ENCODE measurements at regions of chr2 and their contacts with region 1.

Region 1: DNA sequence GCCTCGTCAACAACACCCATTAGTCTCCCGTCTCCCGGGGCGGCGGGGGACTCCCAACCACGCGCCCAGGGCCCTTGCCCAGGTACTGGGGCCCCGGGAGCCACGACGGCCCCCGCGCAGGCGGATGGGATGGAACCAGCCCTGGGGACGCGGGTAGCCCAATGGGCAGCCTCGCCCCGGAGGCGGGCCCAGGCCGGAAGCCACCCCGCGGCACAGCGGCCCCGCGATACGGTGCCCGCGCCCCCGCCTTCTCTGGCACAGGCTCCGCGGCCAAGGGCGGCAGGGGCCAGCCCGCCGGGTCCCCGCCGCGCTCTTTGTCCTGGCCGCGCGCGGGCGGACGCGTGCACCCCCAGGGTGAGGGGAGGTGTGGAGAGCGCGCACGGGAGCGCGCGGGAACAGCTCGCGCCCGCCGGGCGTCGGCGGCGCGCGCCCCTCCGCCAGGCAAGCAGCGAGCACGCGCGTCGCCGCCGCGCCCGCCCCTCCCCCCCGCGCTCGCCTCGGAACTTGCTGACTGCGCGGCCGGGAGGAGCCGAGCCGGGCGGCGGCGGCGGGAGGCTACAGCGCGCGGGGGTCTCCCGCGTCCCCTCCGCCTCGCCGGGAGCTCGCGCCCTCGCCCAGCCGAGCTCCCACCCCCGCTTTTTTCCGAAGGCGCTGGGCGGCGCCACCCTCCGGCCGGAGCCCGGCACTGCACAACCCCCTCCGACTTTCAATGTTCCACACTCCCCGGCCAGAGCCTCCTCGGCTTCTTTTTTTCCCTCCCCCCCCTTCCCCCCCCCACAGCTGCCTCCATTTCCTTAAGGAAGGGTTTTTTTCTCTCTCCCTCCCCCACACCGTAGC is at the start of gene UBE2E3:
- DNase-seq: peak; percentile 86
- H3K4me3 Mint-ChIP-seq: peak within 1 kb of the TSS; percentile 86
- H3K27ac Mint-ChIP-seq: peak within 1 kb of the TSS; percentile 90
- H3K4me1 Mint-ChIP-seq: peaks cover 39% of the 10 kb centered on the region
- H3K27me3 Mint-ChIP-seq: no peaks in the 10 kb centered on the region
- CTCF ChIP-seq: peak; percentile 80
- total RNA-seq, gene UBE2E3: 57.8 and 64.3 TPM in 2 replicates

Region 2: DNA sequence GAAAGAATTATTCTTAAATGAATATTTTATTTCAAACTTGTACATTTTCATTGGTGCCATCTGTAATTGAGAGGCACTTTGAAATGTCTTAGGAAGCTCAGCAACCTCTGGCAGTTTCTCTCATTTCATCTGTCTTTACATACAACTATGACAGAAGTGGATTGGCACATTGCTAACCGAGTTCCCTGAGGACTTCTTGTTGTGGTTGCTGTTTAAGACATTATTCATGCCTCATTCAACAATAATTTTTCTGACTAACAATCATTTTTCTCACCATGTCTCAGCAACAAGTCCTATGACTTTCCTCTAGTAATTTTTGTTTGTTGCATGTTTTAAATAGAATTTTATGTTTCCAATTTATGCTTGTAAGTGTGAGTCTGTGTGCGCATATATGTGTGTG is 689.3 kb before region 1 on chr2:
- CTCF ChIA-PET with region 1: no interaction called
- intact Hi-C with region 1: loop called (anchors 5 kb)
- DNase-seq: no peak
- H3K4me3 Mint-ChIP-seq: peak overlapping the region; percentile 42
- H3K27ac Mint-ChIP-seq: peak overlapping the region; percentile 80
- H3K4me1 Mint-ChIP-seq: peaks cover 50% of the 10 kb centered on the region
- H3K27me3 Mint-ChIP-seq: no peaks in the 10 kb centered on the region
- CTCF ChIP-seq: no peak

Region 3: GRCh38 chr2:180573958-180574357 is 406.4 kb before region 1 on chr2:
- CTCF ChIA-PET with region 1: no interaction called
- intact Hi-C with region 1: loop called (anchors 5 kb)
- DNase-seq: peak; percentile 30
- H3K4me3 Mint-ChIP-seq: peak overlapping the region; percentile 14
- H3K27ac Mint-ChIP-seq: peak overlapping the region; percentile 82
- H3K4me1 Mint-ChIP-seq: peaks cover 74% of the 10 kb centered on the region
- H3K27me3 Mint-ChIP-seq: no peaks in the 10 kb centered on the region
- CTCF ChIP-seq: no peak

Region 4: DNA sequence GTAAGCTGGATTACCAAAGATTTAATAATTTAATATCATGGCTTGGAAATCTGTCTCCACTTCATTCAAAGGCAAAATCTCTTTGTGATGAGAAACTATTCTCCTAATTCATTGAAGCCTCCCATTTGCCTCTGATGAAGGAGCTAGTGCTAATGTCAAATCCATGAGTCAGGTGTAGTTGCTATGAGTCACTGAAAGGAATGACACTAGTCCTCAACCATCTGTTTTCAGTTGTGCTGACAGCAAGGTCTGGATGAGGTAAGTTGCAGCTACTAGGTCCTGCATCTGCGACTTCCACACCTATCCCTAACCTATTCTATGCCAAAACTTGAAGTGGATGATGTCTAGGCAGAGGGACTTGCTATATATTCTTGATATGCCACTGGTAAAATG is 323.9 kb before region 1 on chr2:
- CTCF ChIA-PET with region 1: interaction called, 6 read pairs
- intact Hi-C with region 1: loop called (anchors 5 kb)
- DNase-seq: peak; percentile 42
- H3K4me3 Mint-ChIP-seq: no peak overlapping the region
- H3K27ac Mint-ChIP-seq: peak overlapping the region; percentile 56
- H3K4me1 Mint-ChIP-seq: peaks cover 49% of the 10 kb centered on the region
- H3K27me3 Mint-ChIP-seq: no peaks in the 10 kb centered on the region
- CTCF ChIP-seq: no peak

Region 5: GRCh38 chr2:181058378-181059269 is 78.3 kb after region 1 on chr2:
- CTCF ChIA-PET with region 1: interaction called, 3 read pairs
- intact Hi-C with region 1: loop called (anchors 1 kb)
- DNase-seq: peak; percentile 41
- H3K4me3 Mint-ChIP-seq: no peak overlapping the region
- H3K27ac Mint-ChIP-seq: no peak overlapping the region
- H3K4me1 Mint-ChIP-seq: peaks cover 10% of the 10 kb centered on the region
- H3K27me3 Mint-ChIP-seq: no peaks in the 10 kb centered on the region
- CTCF ChIP-seq: peak; percentile 80